WTC11 (cell line): ENCODE measurements at regions of chr1 and their contacts with region 1.

Region 1: GRCh38 chr1:3471302-3472087 is 17.0 kb downstream of the ARHGEF16 start:
- DNase-seq: peak; percentile 77
- ATAC-seq: peak; percentile 82
- H3K4me3 Mint-ChIP-seq: no peak overlapping the region
- H3K27ac Mint-ChIP-seq: peak overlapping the region; percentile 70; the same call in 1 of the 2 replicates
- H3K4me1 Mint-ChIP-seq: peaks cover 17% of the 10 kb centered on the region
- H3K27me3 Mint-ChIP-seq: no peaks in the 10 kb centered on the region
- CTCF ChIP-seq: no peak

Region 2: GRCh38 chr1:3359351-3360104 is 112.0 kb before region 1 on chr1:
- CTCF ChIA-PET with region 1: no interaction called
- POLR2A ChIA-PET with region 1: no interaction called
- DNase-seq: no peak
- ATAC-seq: no peak
- H3K4me3 Mint-ChIP-seq: no peak overlapping the region
- H3K27ac Mint-ChIP-seq: peak overlapping the region; percentile 45; the same call in 1 of the 2 replicates
- H3K4me1 Mint-ChIP-seq: peaks cover 5% of the 10 kb centered on the region; the same call in 1 of the 2 replicates
- H3K27me3 Mint-ChIP-seq: no peaks in the 10 kb centered on the region; the same call in 1 of the 2 replicates
- CTCF ChIP-seq: no peak

Region 3: DNA sequence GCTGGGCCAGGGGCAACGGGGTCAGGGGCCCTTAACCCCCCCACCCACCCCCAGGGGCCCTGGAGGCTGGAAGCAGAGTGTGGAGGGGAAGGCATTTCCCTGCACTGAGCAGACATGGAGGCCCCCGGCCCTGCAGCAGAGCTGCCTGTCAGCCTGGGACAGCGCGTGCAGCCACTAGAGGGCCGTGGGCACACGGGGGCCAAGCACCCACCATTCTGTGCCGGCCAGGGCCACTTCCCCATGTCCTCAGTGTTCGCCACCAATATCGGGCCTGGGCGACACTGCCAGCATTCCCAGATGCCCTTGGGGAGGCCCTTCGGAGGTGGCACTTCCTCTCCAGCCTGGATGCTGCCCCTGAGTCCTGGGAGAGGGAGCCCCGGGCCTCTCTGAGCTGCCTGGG is 40.2 kb before region 1 on chr1:
- CTCF ChIA-PET with region 1: interaction called, 18 read pairs
- POLR2A ChIA-PET with region 1: no interaction called
- DNase-seq: peak; percentile 55
- ATAC-seq: peak; percentile 91
- H3K4me3 Mint-ChIP-seq: no peak overlapping the region
- H3K27ac Mint-ChIP-seq: no peak overlapping the region
- H3K4me1 Mint-ChIP-seq: peaks cover 3% of the 10 kb centered on the region; the same call in 1 of the 2 replicates
- H3K27me3 Mint-ChIP-seq: no peaks in the 10 kb centered on the region
- CTCF ChIP-seq: no peak

Region 4: DNA sequence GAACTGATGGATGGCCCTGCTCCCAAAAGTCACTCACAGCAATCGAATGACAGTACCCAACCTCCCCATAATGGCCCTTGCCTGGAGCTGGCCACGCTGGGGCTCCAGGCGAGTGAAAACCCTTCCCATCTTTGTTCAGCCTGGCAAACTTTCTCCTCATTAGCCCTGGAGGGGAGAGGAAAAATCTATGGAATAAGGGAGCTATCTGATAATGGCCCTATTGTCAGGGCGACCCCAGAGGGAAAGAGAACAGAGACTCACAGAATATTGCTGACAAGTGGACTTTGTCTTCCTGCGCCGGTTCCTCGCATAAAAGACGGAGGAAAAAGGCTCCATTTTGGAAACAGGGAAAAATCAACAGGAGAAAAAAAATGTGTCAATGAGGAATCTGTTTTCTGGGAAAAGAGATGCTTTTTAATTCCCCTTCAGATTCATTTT is 30.1 kb before region 1 on chr1:
- CTCF ChIA-PET with region 1: interaction called, 10 read pairs
- POLR2A ChIA-PET with region 1: no interaction called
- DNase-seq: no peak
- ATAC-seq: no peak
- H3K4me3 Mint-ChIP-seq: no peak overlapping the region
- H3K27ac Mint-ChIP-seq: peak overlapping the region; percentile 53; the same call in 1 of the 2 replicates
- H3K4me1 Mint-ChIP-seq: no peaks in the 10 kb centered on the region
- H3K27me3 Mint-ChIP-seq: no peaks in the 10 kb centered on the region
- CTCF ChIP-seq: no peak

Region 5: DNA sequence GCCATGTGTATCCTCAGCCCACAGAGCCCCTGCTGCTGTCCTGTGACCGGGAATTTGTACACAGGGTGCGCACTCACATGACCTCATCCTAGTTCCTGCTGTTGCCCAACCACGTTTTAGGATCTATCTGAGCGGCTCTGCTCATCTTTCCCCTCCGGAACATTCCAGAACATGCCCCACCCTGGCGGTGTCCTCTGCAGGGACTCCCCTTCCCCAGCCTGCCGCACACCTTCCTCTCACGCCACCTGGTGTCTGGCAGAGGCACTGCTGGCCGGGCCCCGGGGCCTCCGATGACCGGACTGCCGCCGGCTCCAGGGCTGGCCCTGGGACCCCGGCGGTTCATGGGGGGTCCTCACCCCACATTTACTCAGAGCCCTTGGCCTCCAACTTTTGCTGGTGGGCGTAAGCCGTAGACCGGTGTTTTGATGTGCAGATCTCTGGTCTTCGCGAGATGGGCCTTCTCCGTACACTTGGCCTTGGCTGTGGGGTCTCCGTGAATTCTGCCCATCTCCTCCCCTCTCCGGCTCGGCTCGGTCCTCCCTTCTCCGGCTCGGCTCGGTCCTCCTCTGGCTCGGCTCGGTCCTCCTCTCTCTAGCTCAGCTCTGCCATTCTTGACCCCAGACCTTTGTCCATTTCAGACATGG is 12.4 kb after region 1 on chr1:
- CTCF ChIA-PET with region 1: interaction called, 30 read pairs
- POLR2A ChIA-PET with region 1: interaction called, 3 read pairs
- DNase-seq: peak; percentile 88
- ATAC-seq: peak; percentile 86
- H3K4me3 Mint-ChIP-seq: no peak overlapping the region
- H3K27ac Mint-ChIP-seq: peak overlapping the region; percentile 86
- H3K4me1 Mint-ChIP-seq: peaks cover 3% of the 10 kb centered on the region
- H3K27me3 Mint-ChIP-seq: peaks cover 3% of the 10 kb centered on the region
- CTCF ChIP-seq: peak; percentile 53; the same call in 1 of the 2 replicates

Region 6: GRCh38 chr1:3717715-3718601 is 246.5 kb after region 1 on chr1:
- CTCF ChIA-PET with region 1: no interaction called
- POLR2A ChIA-PET with region 1: no interaction called
- DNase-seq: peak; percentile 81
- ATAC-seq: peak; percentile 69
- H3K4me3 Mint-ChIP-seq: peak overlapping the region; percentile 37; the same call in 1 of the 2 replicates
- H3K27ac Mint-ChIP-seq: no peak overlapping the region
- H3K4me1 Mint-ChIP-seq: peaks cover 8% of the 10 kb centered on the region
- H3K27me3 Mint-ChIP-seq: no peaks in the 10 kb centered on the region
- CTCF ChIP-seq: no peak